ENCODE measurements at regions of chr17 and their contacts with region 1.

Region 1: DNA sequence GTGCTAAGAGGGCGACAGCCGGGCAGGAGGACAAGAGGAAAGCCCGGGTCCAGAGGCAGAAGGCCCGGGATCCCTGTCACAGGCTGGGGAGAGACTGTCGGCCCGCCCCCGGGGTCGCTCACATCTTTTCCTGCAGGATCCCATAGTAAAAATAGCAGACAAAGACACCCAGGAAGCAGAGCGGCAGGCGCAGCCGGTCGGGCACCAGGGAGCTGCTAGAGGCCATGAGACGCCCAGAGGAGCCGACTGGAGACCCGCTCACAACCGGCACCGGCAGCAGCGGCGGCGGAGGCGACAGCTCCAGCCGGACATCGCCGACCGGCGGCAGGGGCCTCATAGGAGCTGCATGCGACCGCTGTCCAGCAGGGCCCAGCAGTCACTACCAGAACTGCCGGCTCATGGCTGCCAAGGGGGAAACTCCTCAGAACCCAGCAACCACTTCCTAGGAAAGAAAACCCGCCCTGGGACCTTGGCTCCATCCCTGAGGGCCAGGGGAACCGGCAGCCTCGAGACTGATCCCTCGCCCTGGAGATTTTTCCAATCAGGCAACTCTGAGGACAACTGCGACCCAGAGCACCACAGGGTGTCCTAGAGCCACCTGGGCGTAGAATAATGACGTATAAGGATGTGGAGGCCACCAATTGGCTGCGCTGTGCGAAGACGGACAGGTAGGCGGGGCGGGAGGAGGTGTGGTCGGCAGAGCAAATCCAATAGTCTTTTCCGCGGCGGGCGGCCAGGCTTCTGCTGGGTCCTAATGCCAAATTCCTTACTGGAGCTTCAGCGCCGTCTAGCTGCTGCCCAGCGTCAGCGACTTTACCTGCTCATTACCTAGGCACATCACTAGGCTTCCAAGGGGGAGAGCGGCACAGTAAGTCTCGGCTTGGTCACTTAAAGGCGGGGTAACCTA is at the start of gene SLC35B1:
- DNase-seq: peak; percentile 99
- ATAC-seq: peak; percentile 98
- H3K4me3 ChIP-seq: peak within 1 kb of the TSS; percentile 61 to 94 (median 84)
- H3K4me3 Mint-ChIP-seq: peak within 1 kb of the TSS; percentile 88
- H3K27ac ChIP-seq: peak within 1 kb of the TSS; percentile 68 to 93
- H3K27ac Mint-ChIP-seq: peak within 1 kb of the TSS; percentile 93
- H3K4me1 ChIP-seq: peaks cover 19 to 25% of the 10 kb centered on the region in 2 donors
- H3K4me1 Mint-ChIP-seq: peaks cover 31% of the 10 kb centered on the region
- H3K27me3 ChIP-seq: no peaks in the 10 kb centered on the region
- H3K27me3 Mint-ChIP-seq: no peaks in the 10 kb centered on the region
- CTCF ChIP-seq: peak; percentile 81
- total RNA-seq, gene SLC35B1: 40.5 and 47.2 TPM in 2 replicates

Region 2: DNA sequence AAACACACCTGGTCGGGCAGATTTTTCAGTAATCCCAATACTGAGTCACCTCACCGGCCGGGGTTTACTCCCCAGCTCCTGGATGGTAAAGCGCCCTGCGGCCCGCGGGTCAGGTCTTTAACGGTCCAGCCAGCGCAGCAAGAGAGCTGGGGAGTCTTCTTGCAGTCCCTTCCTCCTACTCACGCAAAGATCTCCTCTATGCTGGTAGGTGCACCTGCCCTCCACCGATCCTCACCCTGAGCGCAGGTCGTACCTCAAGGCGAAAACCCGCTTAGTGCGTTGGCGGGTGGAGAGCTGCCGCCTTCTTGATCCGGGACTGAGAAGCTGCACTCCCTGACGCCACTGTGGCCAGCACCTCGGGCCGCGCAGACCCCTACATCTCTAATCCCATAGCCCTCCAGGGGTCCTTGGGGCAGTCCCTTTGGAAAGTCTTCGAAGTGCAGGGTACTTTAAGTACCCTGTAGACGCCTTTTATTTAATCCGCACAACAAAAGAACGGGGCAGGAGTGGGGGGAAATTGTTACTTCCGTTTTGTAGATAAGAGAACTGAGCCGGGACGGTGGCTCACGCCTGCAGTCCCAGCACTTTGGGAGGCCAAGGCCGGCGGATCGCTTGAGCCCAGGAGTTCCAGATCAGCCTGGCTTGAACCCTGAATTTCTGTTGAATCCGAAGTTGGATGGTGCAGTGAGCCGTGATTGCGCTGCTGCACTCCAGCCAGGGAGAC is 968.9 kb before region 1 on chr17:
- CTCF ChIA-PET with region 1: no interaction called
- POLR2A ChIA-PET with region 1: no interaction called
- intact Hi-C with region 1: no loop called
- DNase-seq: peak; percentile 57
- ATAC-seq: no peak
- H3K4me3 ChIP-seq: peak overlapping the region in 1 of 5 experiments; percentile 19
- H3K4me3 Mint-ChIP-seq: peak overlapping the region; percentile 52
- H3K27ac ChIP-seq: no peak overlapping the region
- H3K27ac Mint-ChIP-seq: peak overlapping the region; percentile 2
- H3K4me1 ChIP-seq: peaks cover 8 to 15% of the 10 kb centered on the region in 2 donors
- H3K4me1 Mint-ChIP-seq: peaks cover 7% of the 10 kb centered on the region
- H3K27me3 ChIP-seq: peaks cover 1 to 90% (median 57%) of the 10 kb centered on the region in 4 experiments
- H3K27me3 Mint-ChIP-seq: peaks cover 79% of the 10 kb centered on the region
- CTCF ChIP-seq: no peak

Region 3: DNA sequence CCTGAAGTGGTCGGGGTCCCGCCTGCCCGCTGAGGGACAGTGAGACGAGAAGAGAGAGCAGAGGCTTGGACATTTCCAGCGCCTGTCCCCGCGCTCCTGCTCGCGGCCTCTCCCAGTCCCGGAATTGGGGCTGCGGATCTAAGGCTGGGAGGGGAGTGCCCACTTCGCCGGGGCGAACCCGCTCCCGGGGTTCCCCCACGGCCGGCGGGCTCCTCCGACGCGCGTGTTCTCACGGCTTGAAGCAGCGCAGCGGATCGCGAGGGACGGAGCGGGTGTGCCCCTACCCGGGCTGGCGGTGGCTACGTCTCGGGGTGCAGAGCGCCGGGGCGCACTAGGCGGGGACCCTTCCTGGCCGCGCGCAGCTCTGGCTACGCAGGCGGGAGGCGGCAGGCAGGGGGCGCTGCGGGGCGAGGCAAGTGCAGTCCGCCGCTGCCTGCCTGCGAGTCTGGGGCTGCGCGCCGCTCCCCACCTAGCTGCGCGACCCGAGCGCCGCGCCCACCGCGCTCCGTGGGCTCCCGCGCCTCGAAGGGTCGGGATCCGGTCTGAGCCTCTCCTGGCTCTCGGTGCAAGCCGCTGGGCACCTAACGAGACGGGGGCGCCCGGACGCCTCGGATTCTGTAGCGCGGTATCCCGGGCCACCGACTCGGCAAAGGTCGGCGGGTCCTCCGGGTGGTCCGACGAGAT is 211.5 kb before region 1 on chr17:
- CTCF ChIA-PET with region 1: no interaction called
- POLR2A ChIA-PET with region 1: no interaction called
- intact Hi-C with region 1: loop called (anchors 10 kb)
- DNase-seq: peak; percentile 88
- ATAC-seq: peak; percentile 75
- H3K4me3 ChIP-seq: peak overlapping the region in 4 of 5 experiments; percentile 54 to 74 (median 58)
- H3K4me3 Mint-ChIP-seq: peak overlapping the region; percentile 87
- H3K27ac ChIP-seq: no peak overlapping the region
- H3K27ac Mint-ChIP-seq: no peak overlapping the region
- H3K4me1 ChIP-seq: peaks cover 30 to 34% of the 10 kb centered on the region in 2 donors
- H3K4me1 Mint-ChIP-seq: peaks cover 29% of the 10 kb centered on the region
- H3K27me3 ChIP-seq: peaks cover 0 to 53% (median 43%) of the 10 kb centered on the region in 4 experiments
- H3K27me3 Mint-ChIP-seq: peaks cover 41% of the 10 kb centered on the region
- CTCF ChIP-seq: peak; percentile 92

Region 4: GRCh38 chr17:49694847-49695683 is 12.8 kb before region 1 on chr17:
- CTCF ChIA-PET with region 1: interaction called, 41 read pairs
- POLR2A ChIA-PET with region 1: interaction called, 5 read pairs
- intact Hi-C with region 1: no loop called
- DNase-seq: peak; percentile 83
- ATAC-seq: peak; percentile 80
- H3K4me3 ChIP-seq: no peak overlapping the region
- H3K4me3 Mint-ChIP-seq: no peak overlapping the region
- H3K27ac ChIP-seq: no peak overlapping the region
- H3K27ac Mint-ChIP-seq: no peak overlapping the region
- H3K4me1 ChIP-seq: peaks cover 16 to 19% of the 10 kb centered on the region in 2 donors
- H3K4me1 Mint-ChIP-seq: peaks cover 17% of the 10 kb centered on the region
- H3K27me3 ChIP-seq: no peaks in the 10 kb centered on the region
- H3K27me3 Mint-ChIP-seq: peaks cover 3% of the 10 kb centered on the region
- CTCF ChIP-seq: peak; percentile 97

Region 5: DNA sequence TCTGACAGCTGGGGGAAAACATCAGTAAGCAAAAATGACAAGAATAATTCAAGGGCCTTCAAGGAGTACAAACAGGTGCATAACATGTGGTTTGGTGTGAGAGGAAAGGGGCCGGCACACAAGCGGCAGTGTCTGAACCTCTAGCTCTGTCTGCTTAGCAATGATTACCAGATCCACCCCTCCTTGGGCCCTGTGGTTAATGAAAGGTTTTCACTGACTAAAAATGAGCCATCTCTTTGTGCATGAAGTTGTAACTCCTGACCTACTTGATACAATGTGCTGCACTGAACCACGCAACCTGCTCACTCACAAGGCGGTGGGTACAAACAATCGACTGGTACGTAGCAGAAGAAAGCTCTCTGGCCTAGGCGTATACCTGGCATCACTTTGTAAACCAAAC is 40.9 kb after region 1 on chr17:
- CTCF ChIA-PET with region 1: interaction called, 7 read pairs
- POLR2A ChIA-PET with region 1: interaction called, 5 read pairs
- intact Hi-C with region 1: loop called (anchors 1 kb)
- DNase-seq: peak; percentile 67
- ATAC-seq: peak; percentile 64
- H3K4me3 ChIP-seq: peak overlapping the region in 1 of 5 experiments; percentile 6
- H3K4me3 Mint-ChIP-seq: peak overlapping the region; percentile 93
- H3K27ac ChIP-seq: peak overlapping the region; percentile 89 to 95
- H3K27ac Mint-ChIP-seq: peak overlapping the region; percentile 98
- H3K4me1 ChIP-seq: peaks cover 68 to 78% of the 10 kb centered on the region in 2 donors
- H3K4me1 Mint-ChIP-seq: peaks cover 82% of the 10 kb centered on the region
- H3K27me3 ChIP-seq: no peaks in the 10 kb centered on the region
- H3K27me3 Mint-ChIP-seq: no peaks in the 10 kb centered on the region
- CTCF ChIP-seq: no peak

Region 6: GRCh38 chr17:49779739-49780231 is 71.9 kb after region 1 on chr17:
- CTCF ChIA-PET with region 1: interaction called, 58 read pairs
- POLR2A ChIA-PET with region 1: no interaction called
- intact Hi-C with region 1: no loop called
- DNase-seq: peak; percentile 58
- ATAC-seq: peak; percentile 60
- H3K4me3 ChIP-seq: no peak overlapping the region
- H3K4me3 Mint-ChIP-seq: no peak overlapping the region
- H3K27ac ChIP-seq: no peak overlapping the region
- H3K27ac Mint-ChIP-seq: no peak overlapping the region
- H3K4me1 ChIP-seq: no peaks in the 10 kb centered on the region
- H3K4me1 Mint-ChIP-seq: peaks cover 3% of the 10 kb centered on the region
- H3K27me3 ChIP-seq: no peaks in the 10 kb centered on the region
- H3K27me3 Mint-ChIP-seq: no peaks in the 10 kb centered on the region
- CTCF ChIP-seq: peak; percentile 52